BJ (cell line): ENCODE measurements at regions of chr12 and their contacts with region 1.

Region 1: GRCh38 chr12:42482445-42483237 is 106.9 kb downstream of the PRICKLE1 start:
- DNase-seq: no peak
- H3K4me3 ChIP-seq: peak overlapping the region; percentile 62
- H3K27me3 ChIP-seq: no peaks in the 10 kb centered on the region
- CTCF ChIP-seq: peak; percentile 65

Region 2: DNA sequence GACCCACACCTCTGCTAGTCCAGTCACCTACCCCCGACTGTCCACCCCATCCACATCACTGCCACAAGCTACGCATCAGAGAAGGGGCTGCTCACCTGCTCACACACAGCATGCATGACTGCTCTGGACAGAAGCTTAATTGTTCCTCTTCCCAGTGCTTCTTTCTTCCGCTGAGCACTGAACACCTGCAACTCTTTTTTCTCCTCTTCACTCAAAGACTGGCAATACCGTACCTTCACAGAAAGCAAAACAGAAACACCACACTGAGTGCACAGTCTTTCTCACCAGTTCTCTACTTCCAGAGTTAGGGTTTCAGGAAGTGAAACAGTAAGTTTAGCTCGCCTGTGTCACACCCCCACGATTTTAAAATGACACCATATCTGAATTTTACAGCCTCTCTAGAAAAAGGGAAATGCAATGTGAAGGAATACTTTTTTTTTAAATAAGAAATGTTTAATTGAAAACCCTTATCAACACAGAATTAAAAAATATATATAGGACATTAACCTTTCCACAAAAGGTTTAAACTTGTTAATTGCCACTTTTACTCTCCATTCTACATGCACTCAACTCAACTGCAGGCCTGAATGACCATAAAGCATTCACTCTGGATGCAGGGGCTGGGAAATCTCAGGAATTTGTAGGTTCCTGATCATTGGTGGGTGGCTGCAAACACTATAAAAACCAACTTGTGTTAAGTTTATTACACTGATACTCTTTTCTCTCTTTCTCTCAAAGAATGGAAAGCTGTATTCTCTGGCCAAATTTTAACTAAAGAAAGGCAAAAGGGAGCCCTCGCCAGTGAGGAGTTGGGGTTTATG is 13.1 kb before region 1 on chr12:
- CTCF ChIA-PET with region 1: interaction called, 15 read pairs
- POLR2A ChIA-PET with region 1: interaction called, 12 read pairs
- DNase-seq: no peak
- H3K4me3 ChIP-seq: no peak overlapping the region
- H3K27me3 ChIP-seq: no peaks in the 10 kb centered on the region
- CTCF ChIP-seq: no peak

Region 3: DNA sequence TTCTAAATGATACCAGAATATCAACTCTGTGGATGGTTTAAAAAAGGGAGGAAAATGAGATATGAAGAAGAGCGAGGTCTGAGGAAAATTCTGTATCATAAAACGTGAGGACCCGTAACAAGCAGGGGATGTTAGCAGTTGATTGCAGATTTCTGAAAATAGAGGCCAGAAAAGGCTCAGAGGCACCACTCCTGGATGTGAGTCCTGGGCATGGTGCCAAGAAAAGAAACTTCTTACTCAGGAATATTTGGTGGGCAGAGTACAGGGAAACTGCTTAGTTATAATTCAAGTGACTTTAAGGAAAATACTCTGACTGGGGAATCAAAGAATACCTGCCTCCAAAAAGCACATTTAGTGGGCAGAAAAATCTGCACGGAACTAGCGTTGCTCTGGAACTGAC is 21.4 kb after region 1 on chr12:
- CTCF ChIA-PET with region 1: interaction called, 6 read pairs
- POLR2A ChIA-PET with region 1: interaction called, 17 read pairs
- DNase-seq: no peak
- H3K4me3 ChIP-seq: no peak overlapping the region
- H3K27me3 ChIP-seq: no peaks in the 10 kb centered on the region
- CTCF ChIP-seq: no peak

Region 4: DNA sequence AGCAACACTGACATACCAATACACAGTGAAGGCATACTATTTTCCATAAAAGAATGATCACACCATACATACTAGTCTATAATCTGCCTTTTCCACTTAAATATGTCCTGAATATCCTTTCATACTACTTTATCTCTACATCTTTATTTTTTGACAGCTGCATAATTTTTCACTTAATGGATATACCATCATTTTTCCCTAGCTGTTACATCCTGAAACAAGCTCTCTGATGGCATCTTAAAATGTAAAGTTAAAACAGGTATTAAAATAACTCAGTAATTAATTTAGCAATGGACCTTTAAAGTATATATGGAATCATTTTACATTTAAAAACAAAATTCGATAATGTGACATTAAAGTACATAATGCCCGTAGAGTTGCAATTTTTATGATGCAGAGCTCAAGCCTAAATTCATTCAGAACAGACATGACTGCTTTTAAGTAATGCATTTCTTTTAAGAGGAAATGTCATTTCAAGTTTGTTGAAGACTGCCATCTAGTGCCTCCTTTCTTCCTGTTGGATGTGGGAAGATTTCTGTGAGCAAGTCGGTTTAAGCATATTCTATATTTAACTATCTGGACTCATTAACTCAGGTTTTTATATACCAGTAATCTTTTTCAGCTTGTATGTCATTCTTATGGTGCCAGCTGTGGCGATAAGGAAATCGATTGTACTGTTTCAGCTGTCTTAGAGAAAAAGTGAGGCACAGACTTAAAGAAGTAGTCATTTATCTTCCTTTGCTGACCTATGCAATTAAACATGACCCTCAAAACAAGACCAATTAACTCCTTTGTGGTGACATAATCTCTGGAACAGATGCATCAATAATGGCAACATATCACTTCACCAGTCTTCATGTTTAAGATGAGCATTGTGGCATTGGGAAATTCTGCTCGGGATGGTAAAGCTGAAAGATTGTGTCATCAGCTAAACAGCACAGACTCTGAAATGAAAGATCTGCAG is 86.6 kb after region 1 on chr12:
- CTCF ChIA-PET with region 1: interaction called, 39 read pairs
- POLR2A ChIA-PET with region 1: no interaction called
- DNase-seq: peak; percentile 33
- H3K4me3 ChIP-seq: no peak overlapping the region
- H3K27me3 ChIP-seq: no peaks in the 10 kb centered on the region
- CTCF ChIP-seq: peak; percentile 68

Region 5: DNA sequence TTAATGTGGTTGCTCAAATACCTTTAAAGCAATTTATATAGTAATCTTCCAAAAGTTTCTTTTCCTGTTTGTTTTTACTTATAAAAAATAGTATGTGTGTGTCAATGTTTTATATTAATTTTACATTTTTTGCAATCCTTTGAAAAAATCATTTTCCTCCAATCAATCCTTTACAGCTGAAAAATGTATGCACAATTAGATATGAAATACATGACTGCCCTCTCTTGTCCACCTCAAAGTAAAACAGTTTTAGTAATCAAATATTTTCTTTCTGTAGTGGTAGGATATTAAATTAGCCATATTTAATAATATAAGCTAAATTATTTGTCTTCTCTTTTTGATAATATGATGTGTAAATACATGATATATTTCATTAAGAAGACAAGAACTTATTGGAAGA is 799.5 kb after region 1 on chr12:
- CTCF ChIA-PET with region 1: interaction called, 51 read pairs
- POLR2A ChIA-PET with region 1: no interaction called
- DNase-seq: no peak
- H3K4me3 ChIP-seq: no peak overlapping the region
- H3K27me3 ChIP-seq: no peaks in the 10 kb centered on the region
- CTCF ChIP-seq: peak; percentile 29; the same call in 1 of the 2 replicates